HEK293 (cell line): ENCODE measurements at regions of chr10 and their contacts with region 1.

Region 1: DNA sequence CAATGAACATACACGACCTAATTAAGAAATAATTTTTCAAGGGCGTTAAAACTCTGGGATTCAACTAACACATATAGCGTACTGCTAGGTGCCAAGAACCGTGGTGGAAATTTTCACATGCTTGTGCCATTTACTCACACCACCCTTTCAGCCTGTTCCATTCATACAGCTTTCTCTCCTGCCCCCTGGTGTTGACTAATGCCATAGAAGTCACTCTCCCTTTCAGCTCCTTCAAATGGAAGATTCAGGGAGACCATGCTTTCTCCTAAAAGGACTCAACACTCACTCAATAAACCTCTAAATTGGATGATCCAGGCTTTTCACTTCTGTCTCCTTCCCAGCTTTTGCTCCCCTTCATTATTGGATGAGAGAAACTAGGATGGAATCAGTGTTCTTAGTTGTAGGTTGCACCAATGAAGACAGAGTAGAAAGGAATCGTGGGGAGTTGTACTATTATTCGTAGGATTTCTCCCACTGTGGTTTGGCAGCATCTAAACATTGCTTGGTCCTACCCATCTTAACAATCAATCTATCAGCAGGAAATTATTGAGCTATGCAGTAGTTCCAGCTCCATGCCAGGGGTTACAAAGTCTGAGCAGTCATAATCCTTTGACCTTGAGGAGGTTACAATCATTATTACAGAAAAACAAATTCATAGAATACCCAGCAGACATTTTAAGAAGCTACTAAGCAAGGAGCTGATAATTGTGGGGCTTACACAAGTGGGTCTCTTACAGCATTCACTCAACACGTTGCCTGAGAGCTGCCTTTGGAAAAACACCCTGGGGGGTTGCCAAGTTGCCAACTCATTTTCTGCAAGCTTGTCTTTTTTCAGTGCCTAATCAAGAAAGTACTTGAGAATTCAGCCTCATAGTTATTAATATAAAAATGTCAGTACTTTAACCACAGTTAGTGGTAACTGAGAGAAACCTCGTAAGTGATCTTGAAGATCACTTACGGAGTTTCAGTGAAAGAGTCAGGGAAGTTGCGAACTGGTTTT is 2.8 kb upstream of the PPP1R3C start:
- H3K4me3 ChIP-seq: no peak overlapping the region
- H3K27ac ChIP-seq: no peak overlapping the region
- H3K4me1 ChIP-seq: no peaks in the 10 kb centered on the region
- CTCF ChIP-seq: peak; percentile 66; the same call in 1 of the 2 replicates

Region 2: DNA sequence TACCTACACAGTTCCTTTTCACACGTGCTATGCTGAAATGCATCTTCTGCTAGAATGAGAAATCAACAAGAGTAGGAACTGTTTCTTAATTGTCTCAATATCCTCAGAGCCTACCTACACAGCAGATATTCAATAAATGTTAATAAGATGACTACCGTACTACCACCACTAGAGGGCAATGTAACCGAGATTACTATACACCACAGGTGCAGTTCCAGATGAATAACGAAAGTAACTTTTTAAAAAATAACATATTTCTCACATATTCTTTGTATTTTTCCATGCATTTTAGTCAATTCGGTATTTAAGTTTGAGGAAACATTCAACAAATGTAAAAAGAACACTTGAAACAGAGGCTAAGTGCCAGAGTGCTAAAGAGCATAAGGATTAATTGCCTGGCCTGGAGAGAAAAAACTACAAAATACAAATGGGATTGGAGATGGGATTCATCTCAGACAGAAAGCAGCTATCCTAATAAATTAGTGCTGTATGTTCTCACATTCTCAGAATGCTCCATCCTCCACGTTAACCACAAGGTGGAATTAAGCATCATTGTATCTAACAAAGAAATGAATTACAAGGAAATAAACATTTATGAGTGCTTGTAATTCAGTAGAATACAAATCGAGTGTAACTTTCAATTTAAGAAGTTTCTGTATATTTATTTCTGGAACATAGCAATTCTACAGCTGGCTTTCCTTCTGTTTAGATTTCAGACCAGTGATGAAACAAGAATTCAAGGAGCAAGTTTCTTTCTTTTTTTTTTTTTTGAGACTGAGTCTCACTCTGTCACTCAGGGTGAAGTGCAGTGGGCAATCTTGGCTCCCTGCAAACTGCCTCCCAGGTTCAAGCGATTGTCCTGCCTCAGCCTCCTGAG is 245.8 kb before region 1 on chr10:
- CTCF ChIA-PET with region 1: interaction called, 16 read pairs
- POLR2A ChIA-PET with region 1: no interaction called
- H3K4me3 ChIP-seq: no peak overlapping the region
- H3K27ac ChIP-seq: no peak overlapping the region
- H3K4me1 ChIP-seq: peaks cover 3% of the 10 kb centered on the region; the same call in 1 of the 2 replicates
- CTCF ChIP-seq: no peak; the same call in 1 of the 2 replicates

Region 3: DNA sequence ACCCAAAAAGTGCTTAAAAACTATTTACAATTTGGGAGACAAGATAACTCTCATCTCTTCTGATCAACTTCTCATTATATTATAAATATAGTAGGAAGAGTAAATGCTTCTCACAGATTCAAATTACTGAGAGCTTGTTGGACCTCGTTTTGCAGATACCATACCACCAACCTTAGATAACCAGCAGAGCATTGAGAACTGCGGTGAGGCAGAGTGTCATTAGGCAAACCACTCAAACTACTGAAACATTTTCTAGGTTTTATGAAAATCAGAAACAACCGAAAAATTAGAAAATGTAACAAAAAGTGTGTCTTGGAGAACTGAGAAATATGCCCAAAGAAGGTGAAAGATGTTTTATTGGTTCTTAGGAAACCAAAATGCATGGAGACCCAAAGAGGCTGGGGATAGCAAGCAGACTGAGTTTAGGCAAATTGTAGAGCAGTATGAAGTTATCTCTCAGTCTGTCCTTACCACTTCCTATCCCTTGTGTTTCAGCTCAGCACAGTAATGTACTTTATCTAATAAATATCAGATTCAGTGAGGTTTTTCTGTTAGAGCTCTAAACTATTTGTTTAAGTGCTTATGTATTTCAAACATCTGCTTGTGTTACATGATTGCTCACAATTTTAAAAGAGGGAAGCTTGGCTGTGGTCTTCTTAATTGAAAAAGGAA is 147.7 kb before region 1 on chr10:
- CTCF ChIA-PET with region 1: interaction called, 44 read pairs
- POLR2A ChIA-PET with region 1: no interaction called
- H3K4me3 ChIP-seq: no peak overlapping the region
- H3K27ac ChIP-seq: no peak overlapping the region
- H3K4me1 ChIP-seq: no peaks in the 10 kb centered on the region
- CTCF ChIP-seq: no peak

Region 4: GRCh38 chr10:91551856-91552255 is 83.8 kb before region 1 on chr10:
- CTCF ChIA-PET with region 1: interaction called, 50 read pairs
- POLR2A ChIA-PET with region 1: no interaction called
- H3K4me3 ChIP-seq: no peak overlapping the region
- H3K27ac ChIP-seq: no peak overlapping the region
- H3K4me1 ChIP-seq: no peaks in the 10 kb centered on the region
- CTCF ChIP-seq: peak; percentile 92

Region 5: DNA sequence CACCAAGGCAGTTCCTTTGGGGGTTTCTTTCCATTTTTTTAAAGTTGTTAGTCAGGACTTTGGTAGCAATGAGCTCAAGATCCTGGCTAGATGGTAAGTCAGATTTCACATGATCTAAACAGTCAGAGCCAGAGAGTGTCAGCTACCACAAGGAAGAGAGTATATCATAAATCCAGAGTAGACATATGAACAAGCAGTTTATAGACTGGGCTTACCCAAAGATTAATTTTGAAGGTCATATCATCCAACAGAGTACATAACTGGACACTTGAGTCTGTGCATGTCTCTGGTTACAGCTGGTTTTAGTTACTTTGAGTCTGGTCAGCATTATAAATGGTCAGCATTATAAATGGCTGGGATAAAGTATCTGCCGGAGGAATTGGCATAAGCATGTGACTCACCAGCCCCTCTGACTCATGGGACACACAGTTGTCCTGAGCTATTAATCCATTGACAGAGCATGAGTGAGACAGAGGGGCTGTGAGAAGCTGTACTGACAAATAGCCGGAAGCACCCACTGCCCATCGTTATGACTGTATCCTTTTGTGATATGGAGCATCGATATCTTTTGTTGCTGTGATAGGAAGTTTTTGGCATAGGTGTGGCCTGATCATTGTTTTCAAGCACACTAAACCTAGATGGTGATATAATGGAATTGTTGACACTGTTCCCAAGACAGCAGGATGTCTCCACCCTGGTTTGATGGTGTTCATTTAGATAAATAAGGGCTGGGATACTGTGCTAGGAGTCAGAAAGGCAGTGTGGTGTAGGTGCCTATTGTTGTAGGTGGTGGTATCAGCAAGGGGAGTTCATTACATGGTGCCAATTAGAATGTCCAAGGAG is 22.1 kb before region 1 on chr10:
- CTCF ChIA-PET with region 1: interaction called, 14 read pairs
- POLR2A ChIA-PET with region 1: interaction called, 3 read pairs
- H3K4me3 ChIP-seq: no peak overlapping the region
- H3K27ac ChIP-seq: no peak overlapping the region
- H3K4me1 ChIP-seq: peaks cover 2% of the 10 kb centered on the region
- CTCF ChIP-seq: no peak

Region 6: DNA sequence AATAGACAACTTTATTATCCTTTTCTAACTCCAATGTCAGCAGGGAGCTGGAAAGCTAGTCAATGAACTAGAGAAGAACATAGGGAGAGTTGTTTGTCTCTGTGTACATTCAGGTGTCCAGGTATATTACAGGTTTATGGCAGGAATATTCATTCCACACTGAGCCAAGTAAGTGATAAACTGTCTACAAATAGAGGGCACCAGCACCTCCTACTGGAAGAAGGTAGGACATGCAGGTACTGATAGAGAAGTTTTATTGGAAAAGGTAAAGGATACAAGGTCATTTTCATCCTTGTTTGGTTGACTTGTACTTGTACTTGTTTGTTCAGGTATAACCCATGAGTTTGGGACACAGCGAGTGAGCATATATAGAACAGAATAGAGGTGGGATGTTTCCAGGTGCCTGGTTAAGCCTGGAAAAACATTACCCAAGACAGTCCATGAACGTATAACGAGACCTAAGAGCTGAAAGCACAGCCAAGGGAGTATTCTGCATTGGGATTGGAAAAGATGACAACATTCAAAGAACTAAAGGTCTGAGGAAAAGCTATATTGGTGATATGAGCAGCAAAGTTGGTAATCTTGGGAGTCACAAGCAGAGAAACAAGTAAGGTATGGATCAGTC is 58.6 kb after region 1 on chr10:
- CTCF ChIA-PET with region 1: interaction called, 17 read pairs
- POLR2A ChIA-PET with region 1: no interaction called
- H3K4me3 ChIP-seq: no peak overlapping the region
- H3K27ac ChIP-seq: no peak overlapping the region
- H3K4me1 ChIP-seq: no peaks in the 10 kb centered on the region
- CTCF ChIP-seq: 0 out of 2 replicates have a peak, but pooled peaks have one; percentile 16

Region 7: GRCh38 chr10:91768123-91768522 is 132.4 kb after region 1 on chr10:
- CTCF ChIA-PET with region 1: no interaction called
- POLR2A ChIA-PET with region 1: no interaction called
- H3K4me3 ChIP-seq: no peak overlapping the region
- H3K27ac ChIP-seq: no peak overlapping the region
- H3K4me1 ChIP-seq: no peaks in the 10 kb centered on the region
- CTCF ChIP-seq: no peak

Region 8: GRCh38 chr10:91969297-91969696 is 333.6 kb after region 1 on chr10:
- CTCF ChIA-PET with region 1: no interaction called
- POLR2A ChIA-PET with region 1: no interaction called
- H3K4me3 ChIP-seq: no peak overlapping the region
- H3K27ac ChIP-seq: no peak overlapping the region
- H3K4me1 ChIP-seq: no peaks in the 10 kb centered on the region
- CTCF ChIP-seq: no peak